Heart left ventricle (tissue), 16 donors: ENCODE measurements at regions of chr6 and their contacts with region 1.

Region 1: GRCh38 chr6:163338671-163339405 is 75.7 kb upstream of the QKI start:
- DNase-seq: peak; percentile 66 to 74 (median 70)
- ATAC-seq: peak; percentile 62 to 73 (median 68)
- H3K4me3 ChIP-seq: no peak overlapping the region
- H3K27ac ChIP-seq: peak overlapping the region; percentile 71 to 97 (median 90)
- H3K4me1 ChIP-seq: peaks cover 10 to 74% (median 59%) of the 10 kb centered on the region in 12 donors
- H3K27me3 ChIP-seq: no peaks in the 10 kb centered on the region
- CTCF ChIP-seq: no peak
- POLR2A ChIP-seq: no peak

Region 2: GRCh38 chr6:163301726-163302635 is 36.9 kb before region 1 on chr6:
- intact Hi-C with region 1: loop called in 2 of 10 experiments (anchors 5 kb)
- DNase-seq: no peak
- ATAC-seq: peak; percentile 56 to 81 (median 74)
- H3K4me3 ChIP-seq: peak overlapping the region in 2 of 12 donors; percentile 7 to 18
- H3K27ac ChIP-seq: peak overlapping the region in 11 of 12 donors; percentile 28 to 78 (median 57)
- H3K4me1 ChIP-seq: peaks cover 0 to 38% (median 9%) of the 10 kb centered on the region in 12 donors
- H3K27me3 ChIP-seq: no peaks in the 10 kb centered on the region
- CTCF ChIP-seq: no peak
- POLR2A ChIP-seq: no peak

Region 3: DNA sequence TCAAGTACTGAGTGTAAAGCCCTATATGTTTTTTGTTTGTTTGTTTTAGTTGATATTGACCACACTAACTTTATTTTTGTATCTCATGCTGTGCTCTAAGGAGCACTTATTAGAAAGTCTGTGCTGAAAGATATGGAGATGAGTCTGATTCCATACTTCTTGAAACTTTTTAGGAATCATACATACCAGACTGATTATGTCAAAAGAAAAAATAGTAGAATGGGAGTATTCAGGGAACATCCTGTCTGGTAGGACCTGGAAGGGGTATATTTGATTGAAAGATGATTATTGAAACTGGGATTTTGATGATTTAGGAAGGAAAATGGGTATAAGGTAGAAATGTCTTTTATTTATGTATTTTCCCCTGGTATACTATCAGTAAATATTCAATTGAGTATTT is 187.1 kb after region 1 on chr6:
- intact Hi-C with region 1: no loop called
- DNase-seq: no peak
- ATAC-seq: no peak
- H3K4me3 ChIP-seq: no peak overlapping the region
- H3K27ac ChIP-seq: peak overlapping the region in 2 of 12 donors; percentile 4 to 7
- H3K4me1 ChIP-seq: peaks cover 32 to 99% (median 75%) of the 10 kb centered on the region in 12 donors
- H3K27me3 ChIP-seq: no peaks in the 10 kb centered on the region
- CTCF ChIP-seq: no peak
- POLR2A ChIP-seq: no peak

Region 4: DNA sequence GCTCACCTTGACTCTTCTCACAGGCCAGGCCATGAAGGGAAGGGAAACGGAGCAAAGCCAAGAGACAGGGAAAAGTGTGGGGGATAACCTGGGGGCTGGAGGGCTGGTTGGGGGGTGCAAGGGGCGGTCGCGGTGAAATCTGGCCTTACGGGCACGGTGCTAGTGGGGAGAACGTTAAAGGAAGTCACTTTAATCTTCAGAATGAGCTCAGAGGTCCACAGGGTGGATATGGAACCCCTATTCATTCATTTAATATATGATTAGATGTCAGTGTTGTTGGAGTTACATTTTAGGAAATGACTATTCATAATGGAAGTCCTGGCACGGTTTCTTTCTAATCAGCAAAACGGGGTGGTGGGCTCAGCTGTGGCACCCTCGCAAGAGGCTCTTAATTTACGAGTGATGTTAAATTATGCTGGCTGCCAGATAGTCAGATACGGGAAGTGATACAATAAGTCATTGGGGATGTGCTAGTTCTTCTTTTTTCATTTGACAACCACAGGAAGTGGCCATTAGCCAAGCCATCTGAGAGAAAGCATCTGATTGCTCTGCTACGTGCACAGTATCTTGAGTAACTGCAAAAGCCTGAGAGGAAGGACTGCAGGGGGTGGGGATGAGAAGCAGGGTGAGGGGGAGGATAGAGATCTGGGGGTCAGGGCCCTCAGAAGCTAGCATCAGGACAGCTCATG is 328.7 kb after region 1 on chr6:
- intact Hi-C with region 1: no loop called
- DNase-seq: peak in 4 of 5 donors; percentile 45 to 61 (median 52)
- ATAC-seq: peak; percentile 55 to 84 (median 78)
- H3K4me3 ChIP-seq: no peak overlapping the region
- H3K27ac ChIP-seq: peak overlapping the region in 2 of 12 donors; percentile 9 to 56
- H3K4me1 ChIP-seq: peaks cover 0 to 21% (median 6%) of the 10 kb centered on the region in 12 donors
- H3K27me3 ChIP-seq: no peaks in the 10 kb centered on the region
- CTCF ChIP-seq: no peak
- POLR2A ChIP-seq: no peak